CD8-positive, alpha-beta T cell (primary cell): ENCODE measurements at regions of chr17 and their contacts with region 1.

Region 1: DNA sequence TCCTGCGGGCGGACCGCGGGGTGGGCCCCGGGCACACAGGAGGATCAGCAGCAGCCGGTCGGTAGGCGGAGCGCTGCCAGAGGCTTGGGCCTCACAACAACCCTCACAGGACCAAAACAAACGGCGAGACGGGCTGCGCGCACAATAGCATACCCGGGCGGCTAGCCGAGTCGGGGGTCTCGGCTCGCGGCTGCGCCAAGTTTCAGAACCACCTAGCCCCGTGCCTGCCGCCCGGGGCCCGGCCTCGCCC is 747 bp downstream of the ULK2 start:
- DNase-seq: peak; percentile 19 to 74 (median 49)
- ATAC-seq: peak; percentile 50
- H3K4me3 ChIP-seq: peak overlapping the region; percentile 68 to 80
- H3K4me3 Mint-ChIP-seq: peak overlapping the region; percentile 81
- H3K27ac ChIP-seq: peak overlapping the region; percentile 54 to 68
- H3K27ac Mint-ChIP-seq: peak overlapping the region; percentile 79
- H3K4me1 ChIP-seq: peaks cover 46% of the 10 kb centered on the region
- H3K4me1 Mint-ChIP-seq: peaks cover 42% of the 10 kb centered on the region
- H3K27me3 ChIP-seq: no peaks in the 10 kb centered on the region
- H3K27me3 Mint-ChIP-seq: no peaks in the 10 kb centered on the region
- CTCF ChIP-seq: peak; percentile 3

Region 2: GRCh38 chr17:19904924-19905323 is 37.9 kb after region 1 on chr17:
- CTCF ChIA-PET with region 1: no interaction called
- POLR2A ChIA-PET with region 1: no interaction called
- intact Hi-C with region 1: loop called in 1 of 2 experiments (anchors 5 kb)
- DNase-seq: no peak
- ATAC-seq: no peak
- H3K4me3 ChIP-seq: no peak overlapping the region
- H3K4me3 Mint-ChIP-seq: no peak overlapping the region
- H3K27ac ChIP-seq: no peak overlapping the region
- H3K27ac Mint-ChIP-seq: no peak overlapping the region
- H3K4me1 ChIP-seq: no peaks in the 10 kb centered on the region
- H3K4me1 Mint-ChIP-seq: no peaks in the 10 kb centered on the region
- H3K27me3 ChIP-seq: no peaks in the 10 kb centered on the region
- H3K27me3 Mint-ChIP-seq: no peaks in the 10 kb centered on the region
- CTCF ChIP-seq: no peak

Region 3: DNA sequence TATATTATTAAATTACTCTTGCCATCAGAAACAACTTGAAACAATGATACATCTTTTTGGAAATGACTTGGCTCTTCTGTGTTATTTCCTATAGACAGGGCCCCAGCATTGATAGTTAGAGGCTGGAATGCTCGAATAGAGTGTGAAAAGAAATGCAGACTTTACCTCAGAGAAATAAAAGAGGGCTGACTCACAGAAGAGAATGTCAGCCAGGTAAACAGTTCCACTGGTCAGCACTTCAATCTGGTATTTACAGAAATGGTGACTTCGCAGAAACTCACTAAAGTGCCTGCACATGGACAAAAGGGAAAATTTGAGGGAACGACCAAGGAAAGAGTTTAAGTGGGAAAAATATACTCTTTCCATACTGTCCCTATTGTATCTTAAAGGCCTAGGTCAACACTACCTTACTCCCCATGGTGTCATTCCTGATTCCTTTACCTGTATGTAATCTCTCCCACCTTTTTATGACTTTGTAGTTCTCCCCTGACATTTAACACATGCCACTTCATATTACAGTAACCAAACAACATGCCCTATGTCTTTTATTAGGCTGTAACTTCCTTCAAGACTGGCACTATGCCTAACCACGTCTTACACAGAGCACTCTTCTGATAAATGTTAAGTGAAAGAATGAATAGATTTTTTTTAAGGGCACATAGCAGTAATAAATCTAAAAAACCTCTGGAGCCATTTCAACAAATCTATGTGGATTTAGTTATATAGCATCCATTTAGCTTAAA is 73.9 kb after region 1 on chr17:
- CTCF ChIA-PET with region 1: interaction called, 5 read pairs
- POLR2A ChIA-PET with region 1: no interaction called
- intact Hi-C with region 1: loop called in 1 of 2 experiments (anchors 10 kb)
- DNase-seq: no peak
- ATAC-seq: no peak
- H3K4me3 ChIP-seq: no peak overlapping the region
- H3K4me3 Mint-ChIP-seq: no peak overlapping the region
- H3K27ac ChIP-seq: no peak overlapping the region
- H3K27ac Mint-ChIP-seq: peak overlapping the region; percentile 15
- H3K4me1 ChIP-seq: peaks cover 4% of the 10 kb centered on the region
- H3K4me1 Mint-ChIP-seq: peaks cover 37% of the 10 kb centered on the region
- H3K27me3 ChIP-seq: no peaks in the 10 kb centered on the region
- H3K27me3 Mint-ChIP-seq: no peaks in the 10 kb centered on the region
- CTCF ChIP-seq: no peak